Activated CD4-positive, alpha-beta T cell treated with anti-CD3 and anti-CD28 coated beads, Interleukin-2, amount 10 ng/mL, durations not matched to agents 24 days and 14 days (primary cell): ENCODE measurements at regions of chrX and their contacts with region 1.

Region 1: GRCh38 chrX:130165703-130166502 is at the start of gene AIFM1:
- DNase-seq: peak; percentile 96
- H3K4me3 Mint-ChIP-seq: peak within 1 kb of the TSS; percentile 96
- H3K27ac Mint-ChIP-seq: peak within 1 kb of the TSS; percentile 98
- H3K4me1 Mint-ChIP-seq: peaks cover 23% of the 10 kb centered on the region
- H3K27me3 Mint-ChIP-seq: no peaks in the 10 kb centered on the region
- total RNA-seq, gene AIFM1: 44.4 and 47.7 TPM in 2 replicates

Region 2: GRCh38 chrX:129772796-129773431 is 393.0 kb before region 1 on chrX:
- intact Hi-C with region 1: loop called (anchors 10 kb)
- DNase-seq: peak; percentile 81
- H3K4me3 Mint-ChIP-seq: peak overlapping the region; percentile 60
- H3K27ac Mint-ChIP-seq: peak overlapping the region; percentile 95
- H3K4me1 Mint-ChIP-seq: peaks cover 57% of the 10 kb centered on the region
- H3K27me3 Mint-ChIP-seq: no peaks in the 10 kb centered on the region

Region 3: DNA sequence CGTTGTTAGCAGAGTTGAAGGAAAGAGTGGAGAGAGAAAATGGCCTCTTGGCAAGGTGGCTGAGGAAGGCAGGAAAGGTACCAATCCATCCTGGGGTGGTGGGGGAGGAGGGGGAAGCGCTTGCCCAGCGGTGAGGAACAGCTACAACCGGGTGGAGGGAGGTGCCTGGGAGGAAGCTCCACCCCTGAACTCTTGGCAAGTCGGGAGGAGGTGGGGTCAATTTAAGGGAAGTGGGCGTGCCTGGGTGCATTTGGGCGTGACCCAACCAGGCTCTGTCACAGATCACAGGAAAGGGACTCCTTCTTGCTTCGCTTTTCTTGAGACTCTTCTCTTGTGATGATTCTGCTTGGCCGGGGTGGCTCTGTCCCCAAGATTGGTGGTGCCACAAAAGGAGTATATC is 141.8 kb before region 1 on chrX:
- intact Hi-C with region 1: no loop called
- DNase-seq: peak; percentile 95
- H3K4me3 Mint-ChIP-seq: peak overlapping the region; percentile 70
- H3K27ac Mint-ChIP-seq: peak overlapping the region; percentile 63
- H3K4me1 Mint-ChIP-seq: peaks cover 10% of the 10 kb centered on the region
- H3K27me3 Mint-ChIP-seq: no peaks in the 10 kb centered on the region

Region 4: DNA sequence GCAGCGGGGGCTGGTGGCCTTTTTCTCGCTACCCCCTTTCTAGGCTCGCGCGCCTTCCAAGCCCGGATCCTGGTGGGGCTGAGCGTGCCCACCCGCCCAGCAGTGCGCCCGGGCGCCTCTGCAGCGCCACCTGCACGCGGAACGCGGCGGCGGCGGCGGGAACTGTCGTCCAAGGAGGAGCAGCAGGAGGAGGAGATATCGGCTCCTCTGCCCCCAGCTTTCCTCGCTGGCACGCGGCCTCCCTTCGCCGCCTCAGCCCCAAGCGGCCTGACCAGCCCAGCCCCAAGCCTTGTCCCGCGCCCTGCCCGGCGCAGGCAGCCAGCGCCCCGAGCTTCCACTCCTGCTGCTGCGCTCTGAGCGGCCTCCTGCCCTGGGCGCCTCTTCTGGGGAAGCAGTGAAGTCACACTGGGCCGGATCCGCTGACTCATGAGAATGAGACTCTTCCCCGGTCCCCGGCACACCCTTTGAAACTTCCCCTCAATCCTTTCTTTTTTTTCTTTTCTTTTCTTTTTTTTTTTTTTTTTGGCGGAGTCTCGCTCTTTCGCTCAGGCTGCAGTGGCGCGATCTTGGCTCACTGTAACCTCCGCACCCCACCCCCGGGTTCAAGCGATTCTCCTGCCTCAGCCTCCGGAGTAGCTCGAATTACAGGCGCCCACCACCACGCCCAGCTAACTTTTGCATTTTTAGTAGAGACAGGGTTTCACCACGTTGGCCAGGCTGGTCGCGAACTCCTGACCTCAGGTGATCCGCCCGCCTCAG is 45.0 kb before region 1 on chrX:
- intact Hi-C with region 1: loop called (anchors 5 kb)
- DNase-seq: peak; percentile 90
- H3K4me3 Mint-ChIP-seq: peak overlapping the region; percentile 72
- H3K27ac Mint-ChIP-seq: peak overlapping the region; percentile 57
- H3K4me1 Mint-ChIP-seq: peaks cover 17% of the 10 kb centered on the region
- H3K27me3 Mint-ChIP-seq: no peaks in the 10 kb centered on the region